HEK293 (cell line): ENCODE measurements at regions of chr5 and their contacts with region 1.

Region 1: GRCh38 chr5:128885649-128886255 is 79.5 kb upstream of the SLC27A6 start:
- H3K4me3 ChIP-seq: no peak overlapping the region
- H3K27ac ChIP-seq: no peak overlapping the region
- H3K4me1 ChIP-seq: no peaks in the 10 kb centered on the region
- CTCF ChIP-seq: no peak

Region 2: DNA sequence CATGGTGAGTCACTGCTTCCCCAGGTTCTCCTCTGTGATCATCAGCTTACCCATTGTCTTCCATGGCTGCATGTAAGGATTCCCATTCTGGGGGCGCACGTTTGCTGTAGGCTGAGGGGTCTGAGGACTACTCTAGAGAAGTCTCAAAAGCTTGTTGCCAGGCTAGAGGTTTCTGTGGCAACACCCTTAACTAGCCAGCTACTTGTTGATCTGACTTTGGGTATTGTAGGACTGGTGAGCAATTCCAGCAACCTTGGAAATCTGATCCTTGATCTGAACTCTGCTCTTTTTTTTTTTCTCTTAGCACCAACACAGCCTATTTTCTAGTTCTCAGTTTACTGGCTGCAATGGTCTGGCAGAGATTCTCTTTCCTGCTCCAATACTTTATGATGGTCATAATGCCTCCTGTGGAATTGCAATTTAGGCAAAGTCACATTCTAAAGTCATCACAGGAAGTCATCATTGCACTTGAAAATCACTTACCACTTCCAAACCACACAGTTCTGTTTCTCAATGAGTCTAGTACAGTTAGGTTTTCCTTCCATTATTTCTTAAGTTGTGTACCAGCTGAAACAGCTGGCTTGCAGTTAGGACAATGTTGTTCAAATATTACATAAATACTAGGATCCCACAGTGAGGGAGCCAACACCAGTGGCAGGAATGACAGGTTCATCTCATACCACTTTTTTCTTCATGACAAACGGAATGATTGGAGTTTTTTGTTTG is 691.9 kb before region 1 on chr5:
- CTCF ChIA-PET with region 1: interaction called, 10 read pairs
- POLR2A ChIA-PET with region 1: no interaction called
- H3K4me3 ChIP-seq: no peak overlapping the region
- H3K27ac ChIP-seq: no peak overlapping the region
- H3K4me1 ChIP-seq: no peaks in the 10 kb centered on the region
- CTCF ChIP-seq: no peak

Region 3: GRCh38 chr5:128815201-128815600 is 70.6 kb before region 1 on chr5:
- CTCF ChIA-PET with region 1: no interaction called
- POLR2A ChIA-PET with region 1: no interaction called
- H3K4me3 ChIP-seq: no peak overlapping the region
- H3K27ac ChIP-seq: no peak overlapping the region
- H3K4me1 ChIP-seq: no peaks in the 10 kb centered on the region
- CTCF ChIP-seq: no peak

Region 4: GRCh38 chr5:129014193-129014592 is 128.4 kb after region 1 on chr5:
- CTCF ChIA-PET with region 1: no interaction called
- POLR2A ChIA-PET with region 1: no interaction called
- H3K4me3 ChIP-seq: no peak overlapping the region
- H3K27ac ChIP-seq: no peak overlapping the region
- H3K4me1 ChIP-seq: no peaks in the 10 kb centered on the region
- CTCF ChIP-seq: no peak